ENCODE measurements at regions of chr6 and their contacts with region 1.

Region 1: DNA sequence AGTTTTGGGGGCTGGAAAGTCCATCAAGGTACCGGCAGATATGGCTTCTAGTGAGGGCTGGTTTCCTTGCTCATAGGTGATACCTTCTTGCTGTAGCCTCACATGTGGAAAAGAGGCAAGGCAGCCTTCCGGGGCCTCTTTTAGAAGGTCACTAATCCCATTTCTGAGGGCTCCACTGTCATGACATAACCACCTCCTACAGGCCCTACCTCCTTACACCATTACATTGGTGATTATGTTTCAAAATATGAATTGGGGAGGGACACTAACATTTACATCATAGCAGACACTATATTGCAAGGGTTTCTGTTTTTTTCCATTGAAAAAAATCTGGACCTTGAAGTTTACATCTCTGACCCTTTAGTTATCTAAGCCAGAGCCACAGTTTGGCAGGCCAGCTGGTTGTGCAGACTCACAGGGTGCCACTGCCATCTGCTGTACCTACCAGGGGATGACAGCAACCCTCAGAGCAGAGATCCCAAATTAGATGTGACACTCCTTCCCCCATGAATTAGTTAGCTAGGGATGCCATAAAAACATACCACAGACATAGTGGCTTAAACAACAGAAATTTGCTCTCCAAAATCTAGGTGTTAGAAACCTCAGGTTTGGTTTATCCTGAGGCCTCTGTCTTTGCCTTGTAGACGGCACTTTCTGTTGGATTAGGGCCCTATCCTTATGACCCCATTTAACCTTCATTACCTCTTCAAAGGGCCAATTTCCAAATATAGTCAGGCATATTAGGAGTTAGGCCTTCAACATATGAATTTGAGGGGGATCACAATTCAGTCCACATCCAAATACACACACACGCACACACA is 166.4 kb upstream of the RNF217 start:
- DNase-seq: peak; percentile 46 to 81 (median 67)
- H3K4me3 ChIP-seq: no peak overlapping the region
- H3K27ac ChIP-seq: peak overlapping the region in 4 of 59 donors; percentile 1 to 65 (median 26)
- H3K27me3 ChIP-seq: no peaks in the 10 kb centered on the region
- CTCF ChIP-seq: peak in 55 of 56 donors; percentile 24 to 82 (median 67)

Region 2: GRCh38 chr6:123777563-123777962 is 1018.3 kb before region 1 on chr6:
- intact Hi-C with region 1: loop called (anchors 10 kb)
- DNase-seq: no peak
- H3K4me3 ChIP-seq: no peak overlapping the region
- H3K27ac ChIP-seq: no peak overlapping the region
- H3K27me3 ChIP-seq: no peaks in the 10 kb centered on the region
- CTCF ChIP-seq: peak in 53 of 56 donors; percentile 23 to 69 (median 48)

Region 3: GRCh38 chr6:124040655-124041054 is 755.2 kb before region 1 on chr6:
- intact Hi-C with region 1: no loop called
- DNase-seq: no peak
- H3K4me3 ChIP-seq: no peak overlapping the region
- H3K27ac ChIP-seq: no peak overlapping the region
- H3K27me3 ChIP-seq: no peaks in the 10 kb centered on the region
- CTCF ChIP-seq: no peak

Region 4: GRCh38 chr6:124742971-124743370 is 52.9 kb before region 1 on chr6:
- intact Hi-C with region 1: no loop called
- DNase-seq: no peak
- H3K4me3 ChIP-seq: no peak overlapping the region
- H3K27ac ChIP-seq: no peak overlapping the region
- H3K27me3 ChIP-seq: no peaks in the 10 kb centered on the region
- CTCF ChIP-seq: no peak

Region 5: DNA sequence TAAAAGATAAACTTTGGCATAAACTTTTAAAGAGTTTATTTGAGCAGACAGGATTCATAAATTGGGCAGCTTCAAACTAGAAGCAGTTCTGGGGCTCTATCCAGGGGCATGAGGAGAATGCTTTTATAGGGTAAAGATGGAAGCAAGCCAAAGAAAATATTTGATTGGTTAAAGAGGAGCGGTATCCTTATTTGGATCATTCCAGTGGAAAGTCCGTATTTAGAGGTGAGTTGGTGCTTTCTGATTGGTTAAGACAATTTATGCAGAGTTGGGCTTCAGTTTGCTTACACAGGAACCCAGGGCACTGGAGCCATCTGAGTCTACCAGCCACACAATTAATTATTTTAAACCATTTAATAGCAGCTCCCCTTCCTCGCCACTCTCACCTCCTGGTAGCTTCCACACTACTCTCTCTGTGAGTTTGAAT is 128.5 kb after region 1 on chr6:
- intact Hi-C with region 1: no loop called
- DNase-seq: no peak
- H3K4me3 ChIP-seq: no peak overlapping the region
- H3K27ac ChIP-seq: no peak overlapping the region
- H3K27me3 ChIP-seq: no peaks in the 10 kb centered on the region
- CTCF ChIP-seq: no peak